ENCODE measurements at regions of chr10 and their contacts with region 1.

Region 1: DNA sequence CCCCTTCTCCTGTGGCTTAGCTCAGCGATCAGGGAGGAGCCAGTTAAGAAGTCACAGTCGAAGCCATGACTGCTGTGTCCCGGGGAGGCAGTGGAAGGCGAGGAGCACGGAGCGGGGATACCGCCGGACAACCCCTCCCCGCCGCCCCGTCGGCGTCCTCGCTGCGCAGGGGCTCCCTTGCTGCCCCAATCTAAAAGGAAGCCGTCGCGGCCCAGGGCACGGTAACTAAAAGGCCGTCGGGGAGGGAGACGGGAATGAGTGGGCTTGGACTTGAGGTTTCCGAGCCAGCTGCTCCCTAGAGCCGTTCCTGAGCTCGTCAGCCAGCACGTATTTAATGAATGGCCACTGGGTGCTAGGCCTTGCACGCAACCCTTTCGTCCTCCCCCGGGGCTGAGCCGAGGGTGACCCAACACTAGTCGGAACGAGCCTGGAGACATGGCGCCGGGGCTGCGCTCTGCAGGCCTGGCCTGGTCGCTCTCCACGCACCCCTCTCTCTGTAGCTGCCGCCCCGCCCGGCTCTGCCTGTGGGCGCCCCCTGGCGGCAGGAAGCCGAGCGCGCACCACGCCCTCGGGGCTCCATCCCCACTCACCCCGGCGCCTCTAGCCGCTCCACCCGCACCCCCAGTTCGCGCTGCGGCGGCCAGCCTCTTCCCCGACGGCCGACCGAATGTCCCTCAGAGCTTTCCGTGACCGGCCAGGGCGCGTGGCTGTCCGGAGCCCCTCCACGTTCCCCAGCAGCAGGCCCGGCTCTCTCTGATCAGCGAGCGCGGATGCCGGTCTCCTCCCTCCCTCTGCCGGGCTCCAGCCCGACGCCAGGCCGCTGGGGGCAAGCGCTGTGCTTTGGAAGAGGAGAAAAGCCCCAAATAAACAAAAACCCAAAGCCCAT is 29.3 kb upstream of the KCNK18 start:
- DNase-seq: peak; percentile 39 to 81 (median 73)
- ATAC-seq: peak; percentile 93
- H3K4me3 ChIP-seq: peak overlapping the region; percentile 39
- H3K4me3 Mint-ChIP-seq: peak overlapping the region; percentile 47 to 78 (median 70)
- H3K27ac ChIP-seq: no peak overlapping the region
- H3K27ac Mint-ChIP-seq: peak overlapping the region in 1 of 9 donors; percentile 52
- H3K4me1 ChIP-seq: peaks cover 3 to 21% of the 10 kb centered on the region in 2 donors
- H3K4me1 Mint-ChIP-seq: peaks cover 9 to 48% (median 31%) of the 10 kb centered on the region in 7 donors
- H3K27me3 ChIP-seq: peaks cover 0 to 30% of the 10 kb centered on the region in 2 donors
- H3K27me3 Mint-ChIP-seq: peaks cover 70 to 92% (median 80%) of the 10 kb centered on the region in 5 donors

Region 2: DNA sequence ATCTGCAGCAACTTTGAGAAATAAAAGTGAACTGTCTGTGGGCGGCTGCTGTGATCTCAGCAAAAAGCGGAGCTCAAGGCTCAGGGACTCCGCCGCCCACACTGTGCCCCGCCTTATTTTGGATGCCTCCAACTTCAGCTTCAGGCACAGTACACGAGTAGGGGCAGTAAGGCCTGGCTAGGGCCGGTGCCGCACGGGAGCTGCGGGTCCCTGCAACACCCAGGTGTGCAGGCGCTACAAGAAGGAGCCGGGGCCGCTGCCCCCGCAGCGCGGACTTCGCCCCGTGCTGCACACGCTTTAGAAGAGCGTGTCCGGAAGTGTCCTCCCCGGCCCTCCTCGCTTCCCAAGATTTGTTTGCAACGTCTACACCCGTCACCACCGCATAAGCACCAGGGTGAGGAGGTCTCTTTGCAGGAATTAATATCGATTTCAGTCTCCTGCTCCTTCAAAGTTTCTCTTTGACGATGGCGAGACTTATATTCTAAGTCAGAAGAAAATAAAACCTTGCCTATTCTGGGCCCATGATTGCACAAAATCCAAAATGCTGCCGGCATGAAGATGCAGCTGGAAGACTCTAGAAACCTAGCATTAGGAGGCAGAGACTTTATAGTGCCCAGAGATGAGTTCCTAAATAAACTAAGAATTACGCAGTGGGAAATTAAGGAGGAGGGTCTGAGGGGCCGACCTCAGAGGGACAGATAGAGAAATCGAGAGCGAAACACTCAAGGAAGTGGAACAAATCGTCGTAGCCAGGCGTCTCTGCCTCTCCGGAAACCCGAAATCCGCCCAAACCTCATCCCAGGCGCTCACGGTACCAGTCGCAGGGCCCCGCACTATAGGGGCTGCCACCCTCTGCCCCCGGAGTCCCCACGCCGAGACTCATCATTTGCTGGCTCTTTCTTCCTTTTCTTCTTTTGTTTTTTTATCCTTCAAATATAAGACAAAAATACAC is 36.4 kb before region 1 on chr10:
- CTCF ChIA-PET with region 1: no interaction called
- POLR2A ChIA-PET with region 1: no interaction called
- intact Hi-C with region 1: loop called in 1 of 2 experiments (anchors 2 kb)
- DNase-seq: no peak
- ATAC-seq: no peak
- H3K4me3 ChIP-seq: peak overlapping the region; percentile 33
- H3K4me3 Mint-ChIP-seq: peak overlapping the region in 9 of 10 donors; percentile 60 to 95 (median 77)
- H3K27ac ChIP-seq: no peak overlapping the region
- H3K27ac Mint-ChIP-seq: peak overlapping the region in 1 of 9 donors; percentile 80
- H3K4me1 ChIP-seq: peaks cover 0 to 12% of the 10 kb centered on the region in 2 donors
- H3K4me1 Mint-ChIP-seq: peaks cover 9 to 44% (median 37%) of the 10 kb centered on the region in 7 donors
- H3K27me3 ChIP-seq: peaks cover 0 to 52% of the 10 kb centered on the region in 2 donors
- H3K27me3 Mint-ChIP-seq: peaks cover 76 to 90% (median 87%) of the 10 kb centered on the region in 5 donors

Region 3: GRCh38 chr10:117139581-117140524 is 28.2 kb before region 1 on chr10:
- CTCF ChIA-PET with region 1: no interaction called
- POLR2A ChIA-PET with region 1: no interaction called
- intact Hi-C with region 1: loop called in 1 of 2 experiments (anchors 2 kb)
- DNase-seq: no peak
- ATAC-seq: no peak
- H3K4me3 ChIP-seq: no peak overlapping the region
- H3K4me3 Mint-ChIP-seq: no peak overlapping the region
- H3K27ac ChIP-seq: no peak overlapping the region
- H3K27ac Mint-ChIP-seq: no peak overlapping the region
- H3K4me1 ChIP-seq: no peaks in the 10 kb centered on the region
- H3K4me1 Mint-ChIP-seq: peaks cover 2 to 18% (median 11%) of the 10 kb centered on the region in 7 donors
- H3K27me3 ChIP-seq: peaks cover 0 to 11% of the 10 kb centered on the region in 2 donors
- H3K27me3 Mint-ChIP-seq: peaks cover 66 to 75% (median 69%) of the 10 kb centered on the region in 5 donors

Region 4: DNA sequence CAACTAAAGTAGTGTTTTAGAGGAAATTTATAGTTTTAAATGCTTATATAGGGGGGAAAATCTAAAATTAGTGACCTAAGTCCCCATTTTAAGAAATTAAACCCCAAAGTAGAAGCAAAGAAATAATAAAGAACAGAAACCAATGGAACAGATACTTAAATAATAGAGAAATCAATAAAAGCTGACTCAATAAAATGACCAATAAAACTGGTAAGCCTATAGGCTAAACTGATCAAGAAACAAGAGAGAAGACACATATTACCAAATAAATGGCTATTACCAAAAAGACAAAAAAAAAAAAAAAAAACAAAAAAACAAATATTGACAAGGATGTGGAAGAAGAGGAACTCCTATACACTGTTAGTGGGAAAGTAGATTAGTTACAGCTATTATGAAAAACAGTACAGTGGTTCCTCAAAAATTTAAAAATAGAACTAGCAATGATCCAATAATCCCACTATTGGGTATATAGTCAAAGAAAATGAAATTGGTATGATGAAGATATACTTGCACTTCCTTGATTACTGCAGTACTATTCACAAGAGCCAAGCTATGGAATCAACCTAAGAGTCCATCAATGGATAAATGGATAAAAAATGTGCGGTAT is 126.1 kb after region 1 on chr10:
- CTCF ChIA-PET with region 1: no interaction called
- POLR2A ChIA-PET with region 1: no interaction called
- intact Hi-C with region 1: no loop called
- DNase-seq: no peak
- ATAC-seq: no peak
- H3K4me3 ChIP-seq: no peak overlapping the region
- H3K4me3 Mint-ChIP-seq: no peak overlapping the region
- H3K27ac ChIP-seq: no peak overlapping the region
- H3K27ac Mint-ChIP-seq: no peak overlapping the region
- H3K4me1 ChIP-seq: no peaks in the 10 kb centered on the region
- H3K4me1 Mint-ChIP-seq: peaks cover 0 to 9% (median 4%) of the 10 kb centered on the region in 7 donors
- H3K27me3 ChIP-seq: no peaks in the 10 kb centered on the region
- H3K27me3 Mint-ChIP-seq: no peaks in the 10 kb centered on the region

Measured in naive thymus-derived CD4-positive, alpha-beta T cell (primary cell).